ENCODE measurements at regions of chr1 and their contacts with region 1.

Region 1: GRCh38 chr1:115980998-115981993 is 5.0 kb downstream of the SLC22A15 start:
- DNase-seq: peak; percentile 51
- CTCF ChIP-seq: peak; percentile 58

Region 2: GRCh38 chr1:115807723-115808122 is 173.6 kb before region 1 on chr1:
- CTCF ChIA-PET with region 1: interaction called, 17 read pairs
- POLR2A ChIA-PET with region 1: no interaction called
- DNase-seq: peak; percentile 51
- CTCF ChIP-seq: peak; percentile 72

Region 3: GRCh38 chr1:115991909-115992308 is 10.6 kb after region 1 on chr1:
- CTCF ChIA-PET with region 1: interaction called, 37 read pairs
- POLR2A ChIA-PET with region 1: no interaction called
- DNase-seq: no peak
- CTCF ChIP-seq: no peak

Measured in GM10248 (cell line).